PC-9 (cell line): ENCODE measurements at regions of chr10 and their contacts with region 1.

Region 1: DNA sequence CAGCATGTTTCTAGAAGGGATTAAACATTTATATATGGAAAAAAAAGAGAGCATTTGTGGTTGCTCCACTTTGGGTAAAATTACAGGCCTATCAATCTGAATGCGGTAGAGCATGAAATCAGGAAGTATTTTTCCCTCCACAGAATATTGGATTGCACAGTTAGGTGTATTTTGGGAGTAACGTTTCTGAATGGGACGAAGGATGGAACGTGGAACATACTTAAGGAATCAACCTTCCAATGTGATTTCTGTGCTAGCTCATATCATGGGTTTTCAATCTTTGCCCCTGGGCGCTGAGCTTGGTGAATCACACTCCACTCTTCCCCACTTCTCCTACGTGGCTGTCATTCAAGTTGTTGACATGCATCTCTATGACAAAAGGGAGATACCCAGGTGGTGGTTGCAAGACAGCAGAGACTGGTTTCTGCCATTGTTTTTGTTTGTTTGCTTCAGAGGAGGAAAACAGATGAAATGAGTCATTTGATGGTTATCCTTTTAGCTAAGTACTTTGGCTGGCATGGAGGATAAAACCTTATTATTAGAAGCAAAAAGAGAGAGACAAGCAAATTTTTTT is 573.8 kb downstream of the GATA3 start:
- DNase-seq: peak; percentile 88 to 97
- H3K4me3 ChIP-seq: no peak overlapping the region
- H3K27ac ChIP-seq: peak overlapping the region; percentile 88
- H3K4me1 ChIP-seq: peaks cover 25% of the 10 kb centered on the region
- H3K27me3 ChIP-seq: no peaks in the 10 kb centered on the region
- CTCF ChIP-seq: no peak

Region 2: GRCh38 chr10:8065651-8066050 is 562.6 kb before region 1 on chr10:
- CTCF ChIA-PET with region 1: no interaction called
- POLR2A ChIA-PET with region 1: no interaction called
- intact Hi-C with region 1: no loop called
- DNase-seq: peak in 1 of 2 experiments; percentile 72
- H3K4me3 ChIP-seq: no peak overlapping the region
- H3K27ac ChIP-seq: peak overlapping the region; percentile 10; the same call in 1 of the 2 replicates
- H3K4me1 ChIP-seq: 0 out of 2 replicates have a peak, but pooled peaks cover 12% of the 10 kb centered on the region
- H3K27me3 ChIP-seq: no peaks in the 10 kb centered on the region
- CTCF ChIP-seq: no peak

Region 3: GRCh38 chr10:8193546-8193945 is 434.7 kb before region 1 on chr10:
- CTCF ChIA-PET with region 1: no interaction called
- POLR2A ChIA-PET with region 1: interaction called, 3 read pairs
- intact Hi-C with region 1: loop called (anchors 1 kb)
- DNase-seq: peak; percentile 37 to 93
- H3K4me3 ChIP-seq: peak overlapping the region; percentile 52; the same call in 1 of the 2 replicates
- H3K27ac ChIP-seq: peak overlapping the region; percentile 99
- H3K4me1 ChIP-seq: peaks cover 32% of the 10 kb centered on the region
- H3K27me3 ChIP-seq: no peaks in the 10 kb centered on the region
- CTCF ChIP-seq: no peak

Region 4: GRCh38 chr10:8543361-8544069 is 84.8 kb before region 1 on chr10:
- CTCF ChIA-PET with region 1: no interaction called
- POLR2A ChIA-PET with region 1: no interaction called
- intact Hi-C with region 1: loop called (anchors 1 kb)
- DNase-seq: peak; percentile 68 to 85
- H3K4me3 ChIP-seq: no peak overlapping the region; the same call in 1 of the 2 replicates
- H3K27ac ChIP-seq: peak overlapping the region; percentile 99
- H3K4me1 ChIP-seq: peaks cover 39% of the 10 kb centered on the region
- H3K27me3 ChIP-seq: no peaks in the 10 kb centered on the region
- CTCF ChIP-seq: no peak

Region 5: DNA sequence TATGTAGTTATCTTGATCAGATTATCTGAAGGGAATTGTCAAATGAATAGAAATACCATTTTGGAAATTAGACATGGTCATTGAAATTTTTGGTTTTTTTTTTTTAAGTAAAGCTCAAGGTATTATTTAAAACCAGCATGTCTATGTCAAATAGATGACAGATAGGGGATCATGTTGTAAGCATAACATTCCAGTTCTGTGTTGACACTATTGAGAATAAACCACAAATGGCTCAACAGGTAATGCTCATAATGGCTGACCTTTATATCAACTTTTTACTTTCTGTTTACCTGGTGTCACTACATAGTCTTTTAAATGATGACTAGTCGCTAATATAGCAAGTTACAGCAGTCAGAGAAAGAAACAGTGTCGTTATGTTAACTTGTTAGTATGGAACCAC is 42.1 kb after region 1 on chr10:
- CTCF ChIA-PET with region 1: no interaction called
- POLR2A ChIA-PET with region 1: no interaction called
- intact Hi-C with region 1: loop called (anchors 1 kb)
- DNase-seq: peak in 1 of 2 experiments; percentile 81
- H3K4me3 ChIP-seq: no peak overlapping the region
- H3K27ac ChIP-seq: peak overlapping the region; percentile 67
- H3K4me1 ChIP-seq: peaks cover 12% of the 10 kb centered on the region
- H3K27me3 ChIP-seq: no peaks in the 10 kb centered on the region
- CTCF ChIP-seq: no peak

Region 6: GRCh38 chr10:8873310-8873709 is 245.0 kb after region 1 on chr10:
- CTCF ChIA-PET with region 1: no interaction called
- POLR2A ChIA-PET with region 1: no interaction called
- intact Hi-C with region 1: loop called (anchors 1 kb)
- DNase-seq: peak in 1 of 2 experiments; percentile 51
- H3K4me3 ChIP-seq: no peak overlapping the region
- H3K27ac ChIP-seq: peak overlapping the region; percentile 48
- H3K4me1 ChIP-seq: peaks cover 20% of the 10 kb centered on the region
- H3K27me3 ChIP-seq: no peaks in the 10 kb centered on the region
- CTCF ChIP-seq: peak; percentile 53; the same call in 1 of the 2 replicates